ENCODE measurements at regions of chr6 and their contacts with region 1.

Region 1: GRCh38 chr6:26003102-26003694 is 40.6 kb downstream of the TRIM38 start:
- DNase-seq: peak; percentile 72
- H3K4me3 ChIP-seq: no peak overlapping the region
- H3K27ac ChIP-seq: no peak overlapping the region
- H3K4me1 ChIP-seq: no peaks in the 10 kb centered on the region; a peak in 1 of 4 replicates
- H3K27me3 ChIP-seq: no peaks in the 10 kb centered on the region
- CTCF ChIP-seq: peak; percentile 85
- EP300 ChIP-seq: no peak
- RAD21 ChIP-seq: peak; percentile 72

Region 2: GRCh38 chr6:26020329-26021000 is 17.3 kb after region 1 on chr6:
- CTCF ChIA-PET with region 1: interaction called, 55 read pairs
- POLR2A ChIA-PET with region 1: interaction called, 24 read pairs
- DNase-seq: peak; percentile 87
- H3K4me3 ChIP-seq: peak overlapping the region; percentile 78 to 84
- H3K27ac ChIP-seq: peak overlapping the region; percentile 93 to 99
- H3K4me1 ChIP-seq: peaks cover 0 to 19% of the 10 kb centered on the region in 2 experiments; a peak in 2 of 4 replicates
- H3K27me3 ChIP-seq: no peaks in the 10 kb centered on the region
- CTCF ChIP-seq: no peak
- EP300 ChIP-seq: no peak
- RAD21 ChIP-seq: no peak

Measured in SK-N-SH (cell line).